Adrenal gland (tissue), 19 donors: ENCODE measurements at regions of chr1 and their contacts with region 1.

Region 1: GRCh38 chr1:241531195-241532161 is 700 bp upstream of the KMO start:
- DNase-seq: no peak
- H3K4me3 ChIP-seq: peak overlapping the region in 3 of 4 donors; percentile 33 to 84 (median 55)
- H3K27ac ChIP-seq: peak overlapping the region in 4 of 5 donors; percentile 28 to 60 (median 48)
- H3K4me1 ChIP-seq: peaks cover 0 to 4% of the 10 kb centered on the region in 2 donors
- H3K27me3 ChIP-seq: no peaks in the 10 kb centered on the region
- CTCF ChIP-seq: peak; percentile 36 to 84 (median 72)
- POLR2A ChIP-seq: no peak

Region 2: GRCh38 chr1:241311056-241311746 is 220.3 kb before region 1 on chr1:
- intact Hi-C with region 1: no loop called
- DNase-seq: no peak
- H3K4me3 ChIP-seq: no peak overlapping the region
- H3K27ac ChIP-seq: no peak overlapping the region
- H3K4me1 ChIP-seq: no peaks in the 10 kb centered on the region
- H3K27me3 ChIP-seq: no peaks in the 10 kb centered on the region
- CTCF ChIP-seq: no peak
- POLR2A ChIP-seq: no peak

Region 3: DNA sequence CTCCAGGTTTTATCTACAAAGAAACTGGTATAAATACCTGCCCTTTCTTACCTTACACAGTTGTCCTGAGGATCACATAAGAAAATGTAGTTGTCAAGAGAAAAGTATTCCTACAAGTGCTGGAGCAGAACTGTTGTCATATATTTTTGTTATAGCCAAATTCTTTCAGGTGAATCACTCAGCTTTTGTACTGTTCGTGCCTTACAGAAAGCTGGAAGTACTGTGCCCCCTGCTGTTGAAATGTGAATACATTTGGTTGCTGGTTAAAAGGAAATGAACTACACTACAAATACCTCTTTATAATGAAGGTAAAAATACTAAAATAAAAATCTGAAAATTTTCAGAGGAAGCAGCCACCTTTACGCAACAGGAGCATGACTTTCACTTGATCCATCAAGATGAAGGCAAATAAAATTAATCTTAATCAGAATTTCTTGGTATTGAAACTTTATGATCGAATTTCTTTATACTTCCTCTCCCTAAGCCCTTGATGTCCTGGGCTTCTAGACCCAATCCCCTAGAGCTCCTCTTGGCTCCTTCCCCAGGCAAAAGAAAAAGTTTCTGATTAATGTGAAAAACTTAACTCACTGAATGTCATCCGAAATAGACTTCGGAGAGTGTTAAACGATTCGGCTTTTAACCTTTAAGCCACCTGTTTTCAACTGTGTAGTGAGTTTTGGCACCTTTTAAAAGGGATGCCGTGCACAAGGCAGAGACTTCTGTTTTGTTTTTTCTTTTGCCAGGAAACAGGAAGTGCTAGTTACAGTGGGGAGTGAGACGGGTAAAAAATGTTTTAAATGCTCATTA is 96.2 kb after region 1 on chr1:
- intact Hi-C with region 1: loop called (anchors 10 kb)
- DNase-seq: peak in 5 of 7 donors; percentile 39 to 63 (median 50)
- H3K4me3 ChIP-seq: no peak overlapping the region
- H3K27ac ChIP-seq: no peak overlapping the region
- H3K4me1 ChIP-seq: no peaks in the 10 kb centered on the region
- H3K27me3 ChIP-seq: no peaks in the 10 kb centered on the region
- CTCF ChIP-seq: peak; percentile 53 to 70 (median 65)
- POLR2A ChIP-seq: no peak

Region 4: GRCh38 chr1:241834733-241835377 is 303.4 kb after region 1 on chr1:
- intact Hi-C with region 1: loop called (anchors 10 kb)
- DNase-seq: peak in 1 of 7 donors; percentile 10
- H3K4me3 ChIP-seq: no peak overlapping the region
- H3K27ac ChIP-seq: no peak overlapping the region
- H3K4me1 ChIP-seq: no peaks in the 10 kb centered on the region
- H3K27me3 ChIP-seq: no peaks in the 10 kb centered on the region
- CTCF ChIP-seq: peak; percentile 58 to 75 (median 68)
- POLR2A ChIP-seq: no peak